Activated naive CD4-positive, alpha-beta T cell treated with anti-CD3 and anti-CD28 coated beads for 36 hours (primary cell): ENCODE measurements at regions of chr5 and their contacts with region 1.

Region 1: GRCh38 chr5:114449860-114450421 is 88.1 kb downstream of the KCNN2 start:
- DNase-seq: peak; percentile 68
- H3K4me3 Mint-ChIP-seq: no peak overlapping the region
- H3K27ac Mint-ChIP-seq: no peak overlapping the region
- H3K4me1 Mint-ChIP-seq: peaks cover 4% of the 10 kb centered on the region
- H3K27me3 Mint-ChIP-seq: peaks cover 3% of the 10 kb centered on the region

Region 2: GRCh38 chr5:114101153-114101552 is 348.8 kb before region 1 on chr5:
- CTCF ChIA-PET with region 1: interaction called, 3 read pairs
- intact Hi-C with region 1: loop called (anchors 2 kb)
- DNase-seq: peak; percentile 5
- H3K4me3 Mint-ChIP-seq: no peak overlapping the region
- H3K27ac Mint-ChIP-seq: no peak overlapping the region
- H3K4me1 Mint-ChIP-seq: no peaks in the 10 kb centered on the region
- H3K27me3 Mint-ChIP-seq: no peaks in the 10 kb centered on the region

Region 3: DNA sequence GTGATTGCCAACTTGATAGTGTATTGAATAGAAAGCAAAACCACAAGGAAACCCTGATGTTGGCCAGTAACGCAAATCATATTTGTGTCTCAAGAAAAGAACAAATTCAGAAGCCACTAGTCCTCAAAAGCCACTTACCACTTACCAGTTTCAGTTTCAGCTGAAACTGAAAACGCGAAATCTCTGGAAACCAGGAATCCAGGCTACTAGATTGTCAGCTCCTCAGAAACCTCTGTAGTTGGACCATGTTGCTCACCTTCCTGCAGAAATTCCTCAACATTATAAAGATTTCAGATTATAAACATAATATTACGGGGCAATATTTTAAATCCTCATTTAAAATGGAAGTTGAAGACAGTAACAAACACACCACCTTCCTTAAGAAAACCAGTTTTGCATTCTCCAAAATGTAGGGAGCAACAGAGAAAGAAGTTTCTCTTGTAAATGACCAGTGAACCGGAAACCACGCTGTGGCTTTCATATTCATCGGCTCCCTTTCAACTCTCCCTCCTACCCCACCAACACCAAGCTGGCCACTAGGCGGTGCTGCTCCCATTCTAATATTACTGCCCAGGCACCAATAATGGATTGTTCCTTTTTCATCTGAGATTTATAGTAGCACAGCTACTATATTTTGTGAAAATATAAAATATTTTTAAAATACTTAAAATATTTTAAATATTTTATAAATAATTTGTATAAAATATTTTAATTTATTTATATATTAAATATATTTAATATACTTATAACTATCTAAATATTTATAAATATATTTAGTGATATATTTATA is 1184.6 kb after region 1 on chr5:
- CTCF ChIA-PET with region 1: no interaction called
- intact Hi-C with region 1: no loop called
- DNase-seq: peak; percentile 94
- H3K4me3 Mint-ChIP-seq: no peak overlapping the region
- H3K27ac Mint-ChIP-seq: no peak overlapping the region
- H3K4me1 Mint-ChIP-seq: peaks cover 38% of the 10 kb centered on the region
- H3K27me3 Mint-ChIP-seq: peaks cover 12% of the 10 kb centered on the region